BJ (cell line): ENCODE measurements at regions of chr14 and their contacts with region 1.

Region 1: GRCh38 chr14:31377433-31377832 is 42.9 kb downstream of the HEATR5A start:
- DNase-seq: no peak
- H3K4me3 ChIP-seq: no peak overlapping the region
- H3K27me3 ChIP-seq: no peaks in the 10 kb centered on the region
- CTCF ChIP-seq: no peak

Region 2: GRCh38 chr14:30402846-30403245 is 974.6 kb before region 1 on chr14:
- CTCF ChIA-PET with region 1: no interaction called
- POLR2A ChIA-PET with region 1: no interaction called
- DNase-seq: no peak
- H3K4me3 ChIP-seq: no peak overlapping the region
- H3K27me3 ChIP-seq: peaks cover 3% of the 10 kb centered on the region; the same call in 1 of the 2 replicates
- CTCF ChIP-seq: no peak

Region 3: DNA sequence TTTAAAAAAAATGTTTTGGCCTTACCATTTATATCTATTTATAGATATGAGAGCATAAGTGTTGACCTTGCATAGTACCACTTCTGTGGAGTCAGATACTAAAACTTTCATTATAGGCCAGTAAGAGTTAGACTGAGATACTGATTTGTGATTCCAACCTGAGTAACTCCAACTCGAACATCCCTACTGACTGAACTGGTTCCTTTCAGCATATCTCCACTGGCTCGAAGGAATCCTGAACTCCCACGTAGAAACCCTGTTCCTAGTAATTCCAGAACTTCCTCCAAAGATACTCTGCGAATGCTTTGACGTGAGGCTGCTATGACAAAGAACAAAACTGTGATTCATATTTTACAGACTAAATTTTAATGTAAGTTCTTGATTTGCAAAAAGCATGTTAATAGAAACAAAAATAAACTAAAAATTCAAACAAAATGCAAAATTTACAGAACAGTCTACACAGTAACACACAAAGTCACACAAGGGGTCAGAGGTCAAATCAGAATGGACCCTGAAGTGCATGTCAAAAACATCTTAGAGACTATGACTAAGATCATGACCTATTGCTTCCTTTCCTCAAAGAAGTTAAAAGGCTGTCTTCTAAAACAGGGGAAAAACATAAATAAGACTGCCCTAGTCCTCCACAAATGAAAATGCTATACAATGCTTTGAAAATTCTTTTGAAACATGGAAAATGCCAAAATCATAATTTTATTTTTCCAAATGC is 11.4 kb after region 1 on chr14:
- CTCF ChIA-PET with region 1: interaction called, 11 read pairs
- POLR2A ChIA-PET with region 1: no interaction called
- DNase-seq: no peak
- H3K4me3 ChIP-seq: no peak overlapping the region
- H3K27me3 ChIP-seq: no peaks in the 10 kb centered on the region
- CTCF ChIP-seq: no peak

Region 4: GRCh38 chr14:31420319-31421111 is 43.1 kb after region 1 on chr14 and contains the start of gene HEATR5A:
- CTCF ChIA-PET with region 1: no interaction called
- POLR2A ChIA-PET with region 1: no interaction called
- DNase-seq: peak; percentile 66
- H3K4me3 ChIP-seq: peak within 1 kb of the TSS; percentile 100
- H3K27me3 ChIP-seq: no peaks in the 10 kb centered on the region
- CTCF ChIP-seq: peak; percentile 40
- polyA plus RNA-seq, gene HEATR5A: 34.3 and 61.3 TPM in 2 replicates

Region 5: GRCh38 chr14:31479027-31479426 is 101.6 kb after region 1 on chr14:
- CTCF ChIA-PET with region 1: no interaction called
- POLR2A ChIA-PET with region 1: no interaction called
- DNase-seq: no peak
- H3K4me3 ChIP-seq: no peak overlapping the region
- H3K27me3 ChIP-seq: peaks cover 5% of the 10 kb centered on the region
- CTCF ChIP-seq: no peak